Caco-2 (cell line): ENCODE measurements at regions of chr6 and their contacts with region 1.

Region 1: DNA sequence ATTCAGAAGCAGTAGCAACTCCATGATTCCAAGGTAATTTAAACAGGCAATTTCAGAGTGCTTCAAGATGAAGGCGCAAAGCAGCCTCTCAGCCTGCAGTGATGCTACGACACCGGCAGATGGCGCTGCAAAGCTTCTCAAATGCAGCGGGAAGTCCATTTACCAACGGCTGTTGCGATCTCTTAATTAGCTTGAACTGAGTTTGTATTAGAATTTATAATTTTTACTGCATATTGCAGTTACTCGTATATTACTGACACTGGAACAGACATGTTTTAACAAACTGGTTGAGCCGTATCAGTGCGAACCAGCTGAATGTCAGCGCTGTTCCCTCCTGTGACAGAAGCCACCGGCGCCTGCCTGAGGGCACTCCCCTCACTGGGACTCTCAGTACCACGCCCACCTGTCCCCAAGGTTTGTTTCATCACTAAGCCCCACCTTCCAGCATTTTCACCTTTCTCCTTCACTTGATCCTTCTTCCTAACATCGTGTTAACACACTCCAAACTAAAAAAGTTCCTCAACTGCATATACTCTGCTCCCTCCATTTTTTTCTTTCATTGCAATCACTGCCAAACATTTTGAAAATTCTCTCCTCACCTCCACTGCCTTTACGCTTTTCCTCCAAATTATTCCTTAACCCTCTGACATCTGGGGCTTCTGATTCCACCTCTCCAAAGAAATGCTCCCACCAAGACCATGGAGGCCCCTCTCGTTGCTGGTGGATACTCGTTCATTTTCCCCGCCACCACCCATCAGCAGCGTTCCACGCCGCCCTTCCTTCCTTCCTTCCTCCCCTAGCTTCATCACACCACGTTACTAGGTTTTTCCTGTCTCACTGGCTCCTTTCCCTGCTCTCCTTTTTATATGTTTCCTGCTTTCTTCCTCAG is 14.5 kb downstream of the GNL1 start:
- DNase-seq: peak; percentile 75
- H3K4me3 ChIP-seq: peak overlapping the region; percentile 32
- H3K4me3 Mint-ChIP-seq: peak overlapping the region; percentile 69
- H3K27ac Mint-ChIP-seq: peak overlapping the region; percentile 4
- H3K4me1 ChIP-seq: no peaks in the 10 kb centered on the region
- H3K4me1 Mint-ChIP-seq: peaks cover 16% of the 10 kb centered on the region
- H3K27me3 ChIP-seq: no peaks in the 10 kb centered on the region
- H3K27me3 Mint-ChIP-seq: no peaks in the 10 kb centered on the region
- CTCF ChIP-seq: peak; percentile 90 to 97

Region 2: GRCh38 chr6:30600451-30600961 is 58.7 kb after region 1 on chr6:
- CTCF ChIA-PET with region 1: interaction called, 6 read pairs
- POLR2A ChIA-PET with region 1: no interaction called
- intact Hi-C with region 1: loop called (anchors 1 kb)
- DNase-seq: no peak
- H3K4me3 ChIP-seq: no peak overlapping the region
- H3K4me3 Mint-ChIP-seq: no peak overlapping the region
- H3K27ac Mint-ChIP-seq: peak overlapping the region; percentile 53
- H3K4me1 ChIP-seq: no peaks in the 10 kb centered on the region
- H3K4me1 Mint-ChIP-seq: no peaks in the 10 kb centered on the region
- H3K27me3 ChIP-seq: no peaks in the 10 kb centered on the region
- H3K27me3 Mint-ChIP-seq: no peaks in the 10 kb centered on the region
- CTCF ChIP-seq: no peak

Region 3: GRCh38 chr6:30717042-30717844 is 175.5 kb after region 1 on chr6 and contains the start of gene MDC1:
- CTCF ChIA-PET with region 1: no interaction called
- POLR2A ChIA-PET with region 1: no interaction called
- intact Hi-C with region 1: no loop called
- DNase-seq: peak; percentile 99 to 100
- H3K4me3 ChIP-seq: peak within 1 kb of the TSS; percentile 56
- H3K4me3 Mint-ChIP-seq: peak within 1 kb of the TSS; percentile 95
- H3K27ac Mint-ChIP-seq: peak within 1 kb of the TSS; percentile 100
- H3K4me1 ChIP-seq: peaks cover 10% of the 10 kb centered on the region; the same call in 1 of the 2 replicates
- H3K4me1 Mint-ChIP-seq: peaks cover 14% of the 10 kb centered on the region
- H3K27me3 ChIP-seq: no peaks in the 10 kb centered on the region
- H3K27me3 Mint-ChIP-seq: no peaks in the 10 kb centered on the region
- CTCF ChIP-seq: peak; percentile 17 to 31
- total RNA-seq, gene MDC1: 46.6 and 48.6 TPM in 2 replicates